ENCODE measurements at regions of chr1 and their contacts with region 1.

Region 1: GRCh38 chr1:172135076-172135672 is 285.3 kb upstream of the C1orf105 start:
- DNase-seq: no peak
- H3K4me3 ChIP-seq: no peak overlapping the region
- H3K27ac ChIP-seq: peak overlapping the region; percentile 98; the same call in 1 of the 2 replicates
- H3K4me1 ChIP-seq: peaks cover 54% of the 10 kb centered on the region
- H3K27me3 ChIP-seq: no peaks in the 10 kb centered on the region

Region 2: DNA sequence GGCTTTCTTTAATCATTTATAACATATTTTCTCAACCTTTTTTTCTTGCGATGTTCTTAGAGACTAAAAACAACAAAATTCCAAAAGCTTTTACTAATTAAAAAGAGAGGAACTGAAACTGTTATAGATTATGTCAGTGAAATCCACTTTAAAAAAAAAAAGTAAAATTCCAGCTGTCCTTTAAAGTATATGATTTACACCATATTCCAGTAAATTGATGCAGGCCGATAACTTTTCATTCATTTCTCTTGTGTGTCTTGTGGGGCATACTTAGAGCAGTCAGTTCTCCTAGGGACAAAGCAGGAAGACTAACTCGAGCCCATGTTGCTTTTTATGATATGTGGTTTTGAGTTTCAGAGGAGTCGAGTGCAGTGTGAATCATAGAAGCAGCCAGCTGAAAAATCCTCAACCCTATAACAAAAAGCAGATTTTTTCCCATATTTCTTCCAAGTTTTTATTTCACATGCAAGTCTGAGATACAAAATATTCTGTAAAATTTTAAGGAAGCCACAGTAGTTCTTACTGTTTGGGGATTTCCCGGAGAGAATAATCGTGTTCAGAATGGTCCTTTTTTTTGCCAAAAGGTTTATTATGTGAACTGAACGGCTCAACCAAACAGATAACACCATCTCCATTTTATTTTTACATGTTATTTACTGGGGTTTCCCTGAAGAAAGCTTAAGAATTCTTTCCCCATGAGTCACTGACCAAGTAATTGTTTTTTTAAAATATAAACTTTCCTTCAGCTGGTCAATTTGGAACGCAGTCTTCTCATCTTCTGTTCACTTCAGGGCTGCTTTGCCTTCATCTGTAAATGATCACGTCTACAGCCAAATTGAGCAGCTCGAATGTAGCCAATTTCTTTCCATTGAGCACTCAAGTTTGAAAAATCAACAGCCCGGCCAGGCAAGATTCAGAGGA is 208.3 kb after region 1 on chr1:
- in situ Hi-C with region 1: no loop called
- DNase-seq: peak; percentile 90
- H3K4me3 ChIP-seq: peak overlapping the region; percentile 66
- H3K27ac ChIP-seq: peak overlapping the region; percentile 94
- H3K4me1 ChIP-seq: peaks cover 28% of the 10 kb centered on the region
- H3K27me3 ChIP-seq: no peaks in the 10 kb centered on the region

Region 3: DNA sequence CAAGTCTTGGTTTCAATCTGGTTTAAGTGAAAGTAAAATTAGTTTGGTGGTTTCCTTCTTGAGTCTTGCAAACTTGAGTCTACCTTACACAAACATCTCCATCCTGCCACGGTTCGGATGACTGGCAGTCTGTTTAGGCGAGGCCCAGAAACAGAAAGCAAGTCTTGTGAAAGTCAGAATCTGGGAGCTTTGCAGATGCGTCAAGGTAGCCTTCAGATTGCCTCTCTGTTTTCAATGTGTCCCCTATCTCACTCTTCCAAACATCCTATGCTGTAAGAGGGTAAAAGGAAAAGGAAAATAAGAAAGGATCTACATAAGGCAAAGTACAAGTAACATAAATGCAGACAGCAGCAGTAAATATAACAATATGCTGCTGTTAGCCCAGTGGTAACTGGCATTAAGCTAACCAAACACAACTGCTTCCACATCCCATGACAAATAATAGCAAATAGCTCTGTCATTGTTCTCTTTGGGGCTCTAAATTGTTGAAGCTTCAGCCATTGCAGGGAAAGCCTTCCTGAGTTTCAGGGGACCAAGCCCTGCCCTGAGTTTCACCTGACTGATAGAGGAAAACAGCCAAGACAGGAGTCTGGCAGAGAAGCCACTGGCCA is 259.1 kb after region 1 on chr1:
- in situ Hi-C with region 1: loop called (anchors 5 kb)
- DNase-seq: peak; percentile 49
- H3K4me3 ChIP-seq: peak overlapping the region; percentile 29; the same call in 1 of the 2 replicates
- H3K27ac ChIP-seq: no peak overlapping the region
- H3K4me1 ChIP-seq: peaks cover 67% of the 10 kb centered on the region
- H3K27me3 ChIP-seq: no peaks in the 10 kb centered on the region

Region 4: GRCh38 chr1:172443626-172444453 is 308.7 kb after region 1 on chr1 and contains the start of gene PIGC:
- in situ Hi-C with region 1: no loop called
- DNase-seq: peak; percentile 96
- H3K4me3 ChIP-seq: peak within 1 kb of the TSS; percentile 95
- H3K27ac ChIP-seq: 0 out of 2 replicates have a peak within 1 kb of the TSS, but pooled peaks have one; percentile 14
- H3K4me1 ChIP-seq: peaks cover 7% of the 10 kb centered on the region; the same call in 1 of the 2 replicates
- H3K27me3 ChIP-seq: no peaks in the 10 kb centered on the region
- total RNA-seq, gene PIGC: 18.3 and 27.8 TPM in 2 replicates

Measured in GM23248 (cell line).